GM12878 (cell line): ENCODE measurements at regions of chr22 and their contacts with region 1.

Region 1: DNA sequence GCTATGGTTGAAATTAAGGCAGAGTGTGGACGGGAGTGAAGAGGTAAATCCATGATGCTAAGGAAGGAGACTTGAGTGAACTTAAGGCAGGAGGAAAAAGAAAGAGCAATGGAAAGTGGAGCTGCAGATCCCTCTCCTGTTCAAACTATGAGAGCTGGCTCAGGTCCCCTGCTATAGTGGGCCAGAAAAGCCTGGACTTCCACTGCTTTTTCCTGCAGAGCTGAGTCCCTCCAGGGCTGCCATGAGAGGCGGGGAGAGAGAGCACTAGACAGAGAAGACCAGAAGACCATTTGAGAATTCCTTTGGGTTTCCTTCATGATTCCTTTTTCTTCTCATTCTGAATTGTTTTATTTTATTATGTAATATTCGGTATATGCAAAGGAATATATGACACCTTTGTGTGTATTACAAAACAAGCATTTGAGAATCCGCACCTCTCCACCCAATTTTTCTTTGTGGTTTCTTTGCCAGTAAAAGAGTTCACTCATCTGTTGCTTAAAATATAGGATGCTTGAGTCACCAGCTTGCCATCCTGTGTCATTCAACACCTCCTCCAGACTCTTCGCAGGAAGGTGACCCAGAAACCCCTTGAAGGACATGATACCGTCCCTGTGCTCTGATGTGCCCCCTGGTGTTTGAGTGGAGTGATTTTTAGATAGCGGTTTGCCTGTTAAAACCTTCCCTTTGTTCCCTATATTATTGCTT is 24.4 kb downstream of the SREBF2 start:
- DNase-seq: peak; percentile 46
- ATAC-seq: peak; percentile 60
- H3K4me3 ChIP-seq: no peak overlapping the region
- H3K27ac ChIP-seq: no peak overlapping the region
- H3K4me1 ChIP-seq: peaks cover 47% of the 10 kb centered on the region
- H3K27me3 ChIP-seq: no peaks in the 10 kb centered on the region
- CTCF ChIP-seq: peak; percentile 54 to 76 (median 71)
- EP300 ChIP-seq: no peak
- POLR2A ChIP-seq: no peak
- RAD21 ChIP-seq: peak; percentile 64

Region 2: GRCh38 chr22:41800348-41801146 is 56.8 kb before region 1 on chr22 and contains the start of gene CCDC134:
- CTCF ChIA-PET with region 1: interaction called, 3 read pairs
- POLR2A ChIA-PET with region 1: interaction called, 10 read pairs
- RAD21 ChIA-PET with region 1: interaction called, 18 read pairs
- SMC1A ChIA-PET with region 1: interaction called, 17 read pairs
- in situ Hi-C with region 1: no loop called
- intact Hi-C with region 1: no loop called
- DNase-seq: peak; percentile 70
- ATAC-seq: peak; percentile 98
- H3K4me3 ChIP-seq: peak within 1 kb of the TSS; percentile 89
- H3K27ac ChIP-seq: peak within 1 kb of the TSS; percentile 82
- H3K4me1 ChIP-seq: peaks cover 19% of the 10 kb centered on the region
- H3K27me3 ChIP-seq: no peaks in the 10 kb centered on the region
- CTCF ChIP-seq: no peak
- EP300 ChIP-seq: no peak
- POLR2A ChIP-seq: peak; percentile 95
- RAD21 ChIP-seq: no peak
- polyA plus RNA-seq, gene CCDC134: 0.35 to 1.2 TPM

Region 3: GRCh38 chr22:41841085-41841659 is 16.1 kb before region 1 on chr22:
- CTCF ChIA-PET with region 1: interaction called, 51 read pairs
- POLR2A ChIA-PET with region 1: interaction called, 135 read pairs
- RAD21 ChIA-PET with region 1: interaction called, 50 read pairs
- SMC1A ChIA-PET with region 1: interaction called, 96 read pairs
- in situ Hi-C with region 1: no loop called
- intact Hi-C with region 1: no loop called
- DNase-seq: no peak
- ATAC-seq: no peak
- H3K4me3 ChIP-seq: 0 out of 2 replicates have a peak overlapping the region, but pooled peaks have one; percentile 1
- H3K27ac ChIP-seq: no peak overlapping the region
- H3K4me1 ChIP-seq: peaks cover 22% of the 10 kb centered on the region
- H3K27me3 ChIP-seq: no peaks in the 10 kb centered on the region
- CTCF ChIP-seq: no peak
- EP300 ChIP-seq: no peak
- POLR2A ChIP-seq: no peak
- RAD21 ChIP-seq: no peak

Region 4: DNA sequence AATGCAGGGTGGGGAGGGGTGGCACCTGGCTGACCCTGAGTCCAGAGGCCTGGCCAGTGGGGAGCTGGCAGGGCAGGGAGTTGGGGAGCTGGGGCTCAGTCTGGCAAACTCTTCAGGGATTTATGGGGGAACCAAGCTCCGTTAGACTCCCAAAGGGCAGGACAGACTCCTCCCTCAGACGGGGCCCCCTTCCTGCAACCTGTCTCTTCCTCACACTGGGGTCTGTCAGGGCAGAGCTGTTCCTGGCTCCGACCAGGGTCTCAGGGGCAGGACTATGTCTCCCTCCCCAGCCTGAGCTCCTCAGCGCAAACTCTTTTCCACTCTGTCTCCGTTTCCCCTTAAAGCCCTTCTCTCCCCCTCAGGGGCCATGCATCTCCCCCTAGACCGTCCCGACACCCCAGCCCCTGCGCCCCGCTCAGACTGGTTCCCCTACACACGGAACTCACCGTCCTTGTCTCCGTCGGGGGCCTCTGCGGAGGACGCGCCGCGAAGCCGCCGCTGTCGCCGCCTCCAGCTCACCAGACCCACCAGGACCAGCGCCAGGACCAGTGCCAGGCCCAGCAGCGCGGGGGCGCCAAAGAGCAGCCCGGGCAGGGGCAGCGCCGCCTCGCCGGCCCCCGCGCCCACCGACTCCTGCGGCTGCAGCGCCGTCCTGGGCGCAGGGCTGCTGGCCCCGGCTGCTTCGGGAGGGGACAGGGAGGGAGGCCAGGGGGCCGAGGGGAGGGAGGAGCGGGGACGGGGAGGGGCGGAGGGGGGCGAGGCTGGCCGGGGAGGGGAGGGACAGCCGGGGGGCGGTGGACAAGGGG is 68.6 kb after region 1 on chr22:
- CTCF ChIA-PET with region 1: interaction called, 6 read pairs
- POLR2A ChIA-PET with region 1: interaction called, 58 read pairs
- RAD21 ChIA-PET with region 1: interaction called, 57 read pairs
- SMC1A ChIA-PET with region 1: interaction called, 30 read pairs
- in situ Hi-C with region 1: no loop called
- intact Hi-C with region 1: no loop called
- DNase-seq: no peak
- ATAC-seq: peak; percentile 59
- H3K4me3 ChIP-seq: peak overlapping the region; percentile 97
- H3K27ac ChIP-seq: peak overlapping the region; percentile 93
- H3K4me1 ChIP-seq: peaks cover 53% of the 10 kb centered on the region
- H3K27me3 ChIP-seq: no peaks in the 10 kb centered on the region
- CTCF ChIP-seq: peak; percentile 78 to 87 (median 79)
- EP300 ChIP-seq: no peak
- POLR2A ChIP-seq: peak; percentile 54; the same call in 1 of the 2 replicates
- RAD21 ChIP-seq: peak; percentile 50

Region 5: DNA sequence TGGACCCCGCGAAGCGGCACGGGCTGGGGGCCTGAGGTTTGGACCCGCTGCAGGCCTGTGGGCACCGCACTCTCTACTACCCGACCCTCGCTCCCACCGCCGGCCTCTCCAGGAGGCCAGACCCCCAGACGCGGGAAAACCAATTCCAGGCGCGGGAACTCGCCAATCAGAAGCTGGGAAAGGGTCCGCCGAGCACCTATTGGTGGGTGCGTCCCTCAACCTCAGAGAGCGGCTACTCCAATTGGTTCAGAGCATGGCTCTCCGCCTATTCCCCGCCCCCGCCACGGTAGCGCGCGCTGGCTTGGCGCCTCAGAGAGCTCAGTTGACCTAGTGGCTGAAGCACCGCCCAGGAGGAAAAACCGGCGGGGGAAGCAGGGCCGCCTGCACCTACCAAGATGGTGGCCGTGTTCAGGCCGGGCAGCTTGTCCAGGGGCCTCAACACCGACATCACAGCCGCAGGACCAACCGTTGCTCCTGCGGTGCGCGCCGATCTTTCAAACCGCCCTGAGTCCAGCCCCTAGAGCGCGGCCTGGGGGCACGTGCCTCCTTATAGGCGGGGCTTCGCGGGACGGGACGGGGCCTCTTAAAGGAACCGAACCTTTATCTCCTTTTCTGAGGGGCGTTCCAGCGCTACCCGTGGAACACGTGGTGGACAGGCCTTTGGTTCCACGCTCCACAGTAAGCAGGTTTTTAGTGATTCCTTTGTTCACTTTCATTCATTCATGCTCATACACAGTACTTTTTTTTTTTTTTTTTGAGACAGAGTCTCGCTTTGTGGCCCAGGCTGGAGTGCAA is 89.5 kb after region 1 on chr22 and contains the start of gene CENPM:
- CTCF ChIA-PET with region 1: interaction called, 41 read pairs
- POLR2A ChIA-PET with region 1: interaction called, 61 read pairs
- RAD21 ChIA-PET with region 1: interaction called, 101 read pairs
- SMC1A ChIA-PET with region 1: interaction called, 35 read pairs
- in situ Hi-C with region 1: no loop called
- intact Hi-C with region 1: no loop called
- DNase-seq: peak; percentile 80
- ATAC-seq: peak; percentile 88
- H3K4me3 ChIP-seq: peak within 1 kb of the TSS; percentile 78
- H3K27ac ChIP-seq: peak within 1 kb of the TSS; percentile 94
- H3K4me1 ChIP-seq: peaks cover 59% of the 10 kb centered on the region
- H3K27me3 ChIP-seq: no peaks in the 10 kb centered on the region
- CTCF ChIP-seq: no peak
- EP300 ChIP-seq: no peak
- POLR2A ChIP-seq: peak; percentile 83
- RAD21 ChIP-seq: no peak
- polyA plus RNA-seq, gene CENPM: 36.7 to 62.3 TPM